AG04450 (cell line): ENCODE measurements at regions of chr12 and their contacts with region 1.

Region 1: DNA sequence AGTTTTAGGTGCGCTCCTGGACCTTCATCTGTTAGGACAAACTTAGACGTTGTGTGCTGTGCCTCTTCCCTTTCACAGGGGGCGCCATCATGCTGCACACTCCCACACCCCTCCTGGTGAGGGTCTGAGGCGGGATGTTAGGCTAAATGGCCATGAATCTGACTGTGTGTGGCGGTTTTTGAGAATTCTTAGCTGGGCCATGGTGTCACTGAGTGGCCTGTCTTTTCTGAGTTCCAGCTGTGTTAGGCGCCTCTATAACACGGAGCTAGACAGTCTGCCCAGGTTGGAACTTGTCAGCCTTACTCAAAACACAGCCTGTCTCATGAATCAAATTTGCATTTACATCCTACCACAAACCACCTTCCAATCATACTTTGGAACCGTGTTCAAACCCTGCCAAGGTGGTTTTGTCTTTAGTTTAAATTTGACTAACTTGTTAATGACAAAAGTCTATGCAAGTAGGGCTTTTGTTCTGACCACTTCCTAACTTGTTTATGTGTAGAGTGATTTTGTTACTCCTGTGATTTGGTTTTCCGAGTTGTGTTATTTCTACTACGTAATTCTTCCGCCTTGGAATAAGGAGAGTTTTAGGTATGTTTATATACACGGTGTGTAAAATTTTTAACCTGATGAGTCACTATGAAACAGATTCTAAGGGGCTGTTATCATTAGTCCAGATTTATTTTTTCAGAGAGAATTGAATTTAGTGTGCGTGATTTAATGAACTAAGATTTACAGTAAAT is 19.6 kb downstream of the ACVR1B start:
- DNase-seq: no peak
- H3K4me3 ChIP-seq: peak overlapping the region; percentile 5; the same call in 1 of the 2 replicates
- H3K27ac ChIP-seq: peak overlapping the region; percentile 79
- H3K27me3 ChIP-seq: no peaks in the 10 kb centered on the region
- CTCF ChIP-seq: peak; percentile 83

Region 2: DNA sequence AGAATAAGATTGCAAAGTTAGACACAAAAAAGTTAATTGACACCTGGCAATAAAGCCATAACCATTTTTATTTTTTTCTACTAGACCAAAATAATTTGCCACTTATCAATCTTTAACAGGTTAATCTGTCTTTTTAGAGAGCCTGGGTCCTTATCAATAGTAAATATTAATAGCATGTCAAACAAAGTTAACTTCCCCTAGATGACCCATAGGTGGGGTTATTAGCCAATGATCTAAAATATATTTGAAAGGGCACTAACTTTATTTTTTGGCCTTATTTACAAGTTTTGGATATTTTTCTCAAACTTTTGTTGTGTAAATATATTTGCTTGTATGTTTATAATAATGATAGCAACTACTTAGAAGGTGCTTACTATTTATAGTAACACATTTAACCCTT is 79.2 kb before region 1 on chr12:
- CTCF ChIA-PET with region 1: interaction called, 13 read pairs
- POLR2A ChIA-PET with region 1: no interaction called
- DNase-seq: no peak
- H3K4me3 ChIP-seq: no peak overlapping the region
- H3K27ac ChIP-seq: no peak overlapping the region
- H3K27me3 ChIP-seq: no peaks in the 10 kb centered on the region
- CTCF ChIP-seq: peak; percentile 52

Region 3: GRCh38 chr12:51954561-51955361 is 16.3 kb before region 1 on chr12:
- CTCF ChIA-PET with region 1: interaction called, 33 read pairs
- POLR2A ChIA-PET with region 1: no interaction called
- DNase-seq: no peak
- H3K4me3 ChIP-seq: no peak overlapping the region
- H3K27ac ChIP-seq: no peak overlapping the region
- H3K27me3 ChIP-seq: peaks cover 4% of the 10 kb centered on the region
- CTCF ChIP-seq: no peak